ENCODE measurements at regions of chr1 and their contacts with region 1.

Region 1: GRCh38 chr1:156193488-156194299 is at the start of gene SLC25A44:
- DNase-seq: peak; percentile 95 to 99 (median 96)

Region 2: DNA sequence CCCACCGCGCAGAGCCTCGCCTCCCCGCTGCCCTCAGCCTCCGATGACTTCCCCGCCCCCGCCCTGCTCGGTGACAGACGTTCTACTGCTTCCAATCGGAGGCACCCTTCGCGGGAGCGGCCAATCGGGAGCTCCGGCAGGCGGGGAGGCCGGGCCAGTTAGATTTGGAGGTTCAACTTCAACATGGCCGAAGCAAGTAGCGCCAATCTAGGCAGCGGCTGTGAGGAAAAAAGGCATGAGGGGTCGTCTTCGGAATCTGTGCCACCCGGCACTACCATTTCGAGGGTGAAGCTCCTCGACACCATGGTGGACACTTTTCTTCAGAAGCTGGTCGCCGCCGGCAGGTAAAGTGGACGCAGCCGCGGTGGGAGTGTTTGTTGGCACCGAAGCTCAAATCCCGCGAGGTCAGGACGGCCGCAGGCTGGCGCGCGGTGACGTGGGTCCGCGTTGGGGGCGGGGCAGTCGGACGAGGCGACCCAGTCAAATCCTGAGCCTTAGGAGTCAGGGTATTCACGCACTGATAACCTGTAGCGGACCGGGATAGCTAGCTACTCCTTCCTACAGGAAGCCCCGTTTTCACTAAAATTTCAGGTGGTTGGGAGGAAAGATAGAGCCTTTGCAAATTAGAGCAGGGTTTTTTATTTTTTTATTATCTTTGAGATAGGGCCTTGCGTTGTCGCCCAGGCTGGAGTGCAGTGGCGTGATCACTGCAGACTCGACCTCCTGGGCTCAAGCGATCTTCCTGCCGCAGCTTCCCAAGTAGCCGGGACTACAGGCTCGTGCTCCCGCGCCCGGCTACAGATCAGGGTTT is 19.3 kb after region 1 on chr1 and contains the start of gene PMF1:
- intact Hi-C with region 1: loop called (anchors 2 kb)
- DNase-seq: peak; percentile 95 to 100 (median 98)

Region 3: DNA sequence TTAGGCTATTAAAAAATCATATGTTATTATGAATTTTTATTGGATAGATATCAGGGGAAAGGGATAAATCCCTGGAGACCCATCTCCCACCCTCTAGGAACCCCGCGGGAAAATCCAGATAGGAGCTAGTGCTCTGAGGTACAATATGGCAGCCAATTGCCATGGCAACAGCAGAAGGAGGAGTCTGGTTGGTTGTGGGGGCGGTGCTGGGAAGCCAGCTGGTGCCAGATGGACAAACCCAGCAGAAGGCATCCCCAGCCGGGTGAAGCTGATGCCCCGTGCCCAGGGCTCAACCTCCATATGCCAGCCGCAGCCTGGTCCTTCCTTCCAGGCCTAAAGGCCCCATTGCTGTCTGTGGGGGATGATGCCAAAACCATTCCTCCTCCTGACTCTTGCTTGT is 213.7 kb after region 1 on chr1:
- intact Hi-C with region 1: no loop called
- DNase-seq: peak in 9 of 10 donors; percentile 70 to 97 (median 81)

Region 4: DNA sequence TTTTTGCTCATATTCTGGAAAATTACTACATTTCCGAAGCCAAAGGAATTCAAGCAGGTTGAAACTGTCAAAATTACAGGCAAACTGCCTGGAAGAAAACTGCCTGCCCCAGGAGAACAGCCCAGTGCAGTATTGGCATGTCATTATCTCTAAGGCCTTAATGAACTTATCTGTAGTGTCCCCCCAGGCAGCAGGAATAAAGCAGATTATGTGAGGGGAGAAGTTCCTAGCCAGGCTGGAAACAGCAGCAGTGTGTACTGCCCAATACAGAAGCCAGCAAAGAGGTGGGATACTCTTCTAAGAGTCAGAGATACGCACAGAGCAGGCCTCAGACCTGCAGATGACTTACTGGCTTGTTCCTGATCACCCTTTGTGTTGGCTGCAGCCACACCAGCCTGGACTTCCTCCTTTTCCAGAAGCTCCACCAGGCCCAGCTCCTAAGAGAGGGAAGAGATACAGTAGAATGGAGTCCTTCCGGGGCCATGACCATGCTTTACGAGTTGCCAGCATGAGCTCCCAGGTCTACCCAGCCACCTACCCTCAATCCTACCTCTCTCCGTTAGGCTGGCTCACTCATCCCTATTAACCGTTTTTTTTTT is 367.0 kb after region 1 on chr1:
- intact Hi-C with region 1: no loop called
- DNase-seq: peak in 1 of 10 donors; percentile 72

Measured in posterior cingulate gyrus (tissue), 11 donors.